ENCODE measurements at regions of chrX and their contacts with region 1.

Region 1: DNA sequence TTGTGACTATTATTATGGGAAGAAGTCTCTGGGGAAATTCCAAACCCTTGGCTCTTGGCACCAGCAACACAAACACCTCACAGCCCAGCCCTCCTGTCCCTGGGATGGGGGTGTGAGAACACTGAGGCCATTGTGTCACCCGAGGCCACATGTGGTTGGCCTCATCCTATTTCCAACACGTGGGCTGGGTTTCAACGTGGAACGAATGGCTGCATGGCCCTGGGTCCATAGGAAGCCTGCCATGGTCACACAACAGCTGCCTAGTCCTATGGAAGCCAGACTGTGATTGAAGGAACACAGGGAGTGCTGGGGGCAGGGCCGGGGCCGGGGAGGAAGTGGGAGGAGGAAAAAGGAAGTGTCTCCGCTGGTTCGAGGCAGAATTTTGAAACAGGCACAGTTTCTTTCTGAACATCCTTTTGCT is 10.0 kb downstream of the CLCN4 start:
- DNase-seq: no peak
- ATAC-seq: peak; percentile 42
- H3K4me3 Mint-ChIP-seq: no peak overlapping the region
- H3K27ac Mint-ChIP-seq: peak overlapping the region; percentile 79
- H3K4me1 Mint-ChIP-seq: peaks cover 48% of the 10 kb centered on the region
- H3K27me3 Mint-ChIP-seq: no peaks in the 10 kb centered on the region
- CTCF ChIP-seq: no peak

Region 2: DNA sequence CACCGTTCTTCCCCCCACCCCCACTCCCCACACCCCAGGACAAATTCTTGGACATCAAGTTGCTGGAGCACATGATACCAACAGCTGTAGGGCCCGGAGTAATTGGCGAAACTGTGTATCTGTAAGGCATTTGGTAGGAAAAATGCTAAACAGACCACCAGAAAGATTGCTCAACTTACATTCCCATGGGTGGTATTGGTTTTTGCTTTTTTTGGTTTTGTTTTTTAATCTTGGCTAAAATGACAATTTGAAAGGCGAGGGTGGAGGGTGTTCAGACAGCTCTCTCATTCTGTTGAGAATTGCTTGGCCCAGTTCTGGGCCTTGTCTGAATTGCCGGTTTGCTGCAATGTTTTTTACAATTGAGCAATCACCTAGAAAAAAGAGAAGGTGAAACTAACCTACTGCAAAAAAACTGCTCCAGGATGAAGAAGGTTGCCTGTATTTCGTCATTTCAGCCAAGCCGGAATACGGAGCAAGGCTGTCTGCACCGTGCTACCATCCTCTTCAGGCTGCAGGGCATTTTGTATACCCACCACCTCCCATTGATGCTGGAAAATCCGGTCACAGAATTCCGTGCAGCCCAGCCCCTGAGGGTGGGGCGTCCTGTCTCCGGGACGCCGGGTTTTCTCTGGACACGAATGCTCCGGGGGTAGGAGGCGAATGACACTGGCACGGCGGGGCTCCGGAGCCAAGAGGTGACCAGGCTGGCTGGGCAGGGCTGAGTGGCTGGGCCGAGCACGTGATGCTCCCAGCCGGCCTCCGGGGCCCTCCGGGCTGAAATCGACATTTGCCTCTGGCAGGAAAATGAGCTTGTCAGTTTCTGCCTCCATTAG is 10.3 kb before region 1 on chrX and contains the start of gene CLCN4:
- CTCF ChIA-PET with region 1: no interaction called
- POLR2A ChIA-PET with region 1: interaction called, 8 read pairs
- intact Hi-C with region 1: loop called (anchors 1 kb)
- DNase-seq: peak; percentile 26
- ATAC-seq: peak; percentile 65
- H3K4me3 Mint-ChIP-seq: peak within 1 kb of the TSS; percentile 83
- H3K27ac Mint-ChIP-seq: peak within 1 kb of the TSS; percentile 90
- H3K4me1 Mint-ChIP-seq: peaks cover 34% of the 10 kb centered on the region
- H3K27me3 Mint-ChIP-seq: no peaks in the 10 kb centered on the region
- CTCF ChIP-seq: no peak
- total RNA-seq, gene CLCN4: 3.4 and 4.7 TPM in 2 replicates